OCI-LY7 (cell line): ENCODE measurements at regions of chr2 and their contacts with region 1.

Region 1: GRCh38 chr2:118046634-118047210 is 32.9 kb upstream of the CCDC93 start:
- DNase-seq: peak; percentile 70
- H3K4me3 ChIP-seq: no peak overlapping the region
- H3K27ac ChIP-seq: no peak overlapping the region
- H3K4me1 ChIP-seq: peaks cover 42% of the 10 kb centered on the region
- CTCF ChIP-seq: peak; percentile 96

Region 2: GRCh38 chr2:118032169-118033013 is 14.3 kb before region 1 on chr2:
- CTCF ChIA-PET with region 1: interaction called, 11 read pairs
- POLR2A ChIA-PET with region 1: interaction called, 5 read pairs
- intact Hi-C with region 1: no loop called
- DNase-seq: peak; percentile 69
- H3K4me3 ChIP-seq: no peak overlapping the region
- H3K27ac ChIP-seq: no peak overlapping the region
- H3K4me1 ChIP-seq: peaks cover 18% of the 10 kb centered on the region
- CTCF ChIP-seq: peak; percentile 94

Region 3: DNA sequence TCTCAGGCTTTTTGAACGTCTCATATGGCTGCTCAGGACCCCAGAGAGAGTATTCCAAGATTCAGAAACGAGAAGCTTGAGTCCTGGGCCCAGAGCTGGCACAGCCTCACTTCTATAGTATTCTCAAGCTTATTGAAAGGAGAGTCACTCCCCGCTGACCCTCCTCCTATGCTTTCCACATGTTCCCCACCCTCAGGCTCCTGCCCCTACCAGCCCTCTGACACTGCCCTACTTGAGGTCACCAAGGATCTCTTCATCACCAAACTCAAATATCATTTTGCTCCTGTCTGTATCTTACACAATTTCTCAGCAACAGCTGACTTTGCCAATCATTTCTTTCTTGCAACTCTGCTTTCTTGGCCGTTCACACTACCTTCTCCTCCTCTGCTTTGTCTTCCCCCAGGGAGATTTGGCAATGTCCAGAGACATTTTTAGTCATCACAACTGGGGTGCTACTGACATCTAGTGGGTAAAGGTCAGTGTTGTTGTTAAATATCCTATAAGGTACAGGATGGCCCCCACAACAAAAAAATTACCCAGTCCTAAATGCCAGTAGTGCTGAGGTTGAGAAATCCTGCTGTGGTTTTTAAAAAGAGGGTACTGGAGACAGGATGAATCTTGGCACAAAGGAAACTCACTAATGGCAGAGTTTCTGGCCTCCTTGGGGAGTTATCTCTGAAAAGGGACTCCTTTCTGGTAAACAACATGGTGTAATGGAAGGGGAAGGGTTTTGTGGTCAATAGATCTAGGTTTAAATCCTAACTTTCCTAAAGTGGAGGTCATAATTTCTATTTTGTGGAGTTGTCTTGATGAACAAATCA is 14.6 kb after region 1 on chr2:
- CTCF ChIA-PET with region 1: interaction called, 56 read pairs
- POLR2A ChIA-PET with region 1: interaction called, 72 read pairs
- intact Hi-C with region 1: loop called (anchors 1 kb)
- DNase-seq: peak; percentile 78
- H3K4me3 ChIP-seq: no peak overlapping the region
- H3K27ac ChIP-seq: no peak overlapping the region
- H3K4me1 ChIP-seq: peaks cover 47% of the 10 kb centered on the region
- CTCF ChIP-seq: peak; percentile 92

Region 4: GRCh38 chr2:118202707-118203303 is 156.1 kb after region 1 on chr2:
- CTCF ChIA-PET with region 1: no interaction called
- POLR2A ChIA-PET with region 1: no interaction called
- intact Hi-C with region 1: loop called (anchors 5 kb)
- DNase-seq: peak; percentile 58
- H3K4me3 ChIP-seq: no peak overlapping the region
- H3K27ac ChIP-seq: no peak overlapping the region
- H3K4me1 ChIP-seq: no peaks in the 10 kb centered on the region
- CTCF ChIP-seq: peak; percentile 84

Region 5: GRCh38 chr2:118855451-118856279 is 808.9 kb after region 1 on chr2:
- CTCF ChIA-PET with region 1: no interaction called
- POLR2A ChIA-PET with region 1: no interaction called
- intact Hi-C with region 1: loop called (anchors 10 kb)
- DNase-seq: peak; percentile 70
- H3K4me3 ChIP-seq: peak overlapping the region; percentile 39
- H3K27ac ChIP-seq: no peak overlapping the region
- H3K4me1 ChIP-seq: no peaks in the 10 kb centered on the region
- CTCF ChIP-seq: peak; percentile 90